ENCODE measurements at regions of chr1 and their contacts with region 1.

Region 1: DNA sequence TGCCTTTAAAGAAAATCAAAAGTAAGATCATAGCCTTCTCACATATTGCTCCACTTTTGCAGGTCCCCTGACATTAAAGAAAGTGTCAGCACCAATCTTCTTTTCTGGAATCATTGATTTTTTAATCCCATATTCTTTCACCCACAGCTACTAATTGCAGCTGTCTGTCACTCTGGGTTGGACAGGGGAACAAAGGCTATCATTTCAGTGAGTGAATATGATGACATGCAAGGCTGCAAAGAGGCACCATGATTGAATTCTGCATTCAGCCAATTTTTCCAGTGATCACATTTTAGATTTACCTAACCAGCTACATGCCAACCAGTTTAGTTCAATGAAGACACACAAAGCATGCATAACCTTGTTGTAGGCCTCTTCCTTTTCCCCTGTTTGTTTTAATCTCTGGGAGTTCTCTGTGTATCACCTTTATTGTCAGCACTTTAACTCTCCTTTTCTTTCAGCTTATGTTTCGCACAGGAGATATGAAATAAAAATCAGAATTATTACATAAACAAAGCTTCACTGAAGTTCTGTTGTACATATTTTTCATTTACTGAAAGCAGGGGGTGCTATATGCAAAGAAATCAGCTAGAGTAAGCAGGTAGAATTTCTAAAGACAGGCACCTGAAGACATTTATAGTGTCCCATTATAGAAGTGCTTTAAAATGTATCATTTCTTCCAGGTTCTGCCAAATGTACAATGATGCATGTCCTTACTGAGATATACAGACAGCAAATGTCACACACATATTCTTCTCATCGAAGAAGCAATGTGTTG is 584.8 kb downstream of the PLA2G4A start:
- DNase-seq: peak; percentile 29
- ATAC-seq: peak; percentile 48; the same call in 1 of the 2 replicates
- H3K4me3 ChIP-seq: no peak overlapping the region
- H3K27ac ChIP-seq: no peak overlapping the region
- H3K4me1 ChIP-seq: no peaks in the 10 kb centered on the region
- H3K27me3 ChIP-seq: no peaks in the 10 kb centered on the region
- CTCF ChIP-seq: peak; percentile 56

Region 2: DNA sequence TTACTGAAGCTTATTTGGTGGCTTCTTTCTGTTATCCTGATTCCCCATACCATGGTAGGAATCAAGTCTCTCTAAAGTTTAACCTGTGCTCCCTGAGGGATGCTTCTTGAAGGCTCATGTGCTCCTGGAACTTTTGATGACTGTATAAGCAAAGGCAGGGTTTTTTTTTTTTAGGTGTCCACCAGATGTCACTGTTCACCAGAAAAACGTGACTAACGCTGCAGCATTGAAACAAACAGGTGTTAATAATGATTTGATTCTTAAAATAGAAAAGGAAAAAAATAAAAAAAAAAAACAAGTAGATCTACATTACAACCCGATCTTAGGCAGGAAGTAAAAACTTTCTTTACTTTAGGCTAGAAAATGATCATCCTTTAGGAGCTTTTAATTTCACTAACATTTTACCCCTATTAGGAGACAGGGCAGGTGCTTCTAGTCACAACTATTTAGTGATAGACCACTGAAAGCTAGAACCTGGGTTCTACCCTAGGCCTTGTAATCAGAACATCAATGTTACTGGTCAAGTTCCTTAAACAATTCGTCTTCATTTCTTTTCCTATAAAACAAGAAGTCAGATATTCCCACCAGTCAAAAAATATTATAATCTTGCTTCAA is 361.9 kb before region 1 on chr1:
- CTCF ChIA-PET with region 1: no interaction called
- POLR2A ChIA-PET with region 1: no interaction called
- intact Hi-C with region 1: loop called (anchors 10 kb)
- DNase-seq: peak; percentile 51
- ATAC-seq: no peak
- H3K4me3 ChIP-seq: no peak overlapping the region
- H3K27ac ChIP-seq: no peak overlapping the region
- H3K4me1 ChIP-seq: peaks cover 4% of the 10 kb centered on the region; the same call in 1 of the 2 replicates
- H3K27me3 ChIP-seq: no peaks in the 10 kb centered on the region
- CTCF ChIP-seq: peak; percentile 68

Region 3: GRCh38 chr1:187491082-187491720 is 77.6 kb after region 1 on chr1:
- CTCF ChIA-PET with region 1: no interaction called
- POLR2A ChIA-PET with region 1: no interaction called
- intact Hi-C with region 1: no loop called
- DNase-seq: peak; percentile 70
- ATAC-seq: peak; percentile 80
- H3K4me3 ChIP-seq: no peak overlapping the region
- H3K27ac ChIP-seq: peak overlapping the region; percentile 61
- H3K4me1 ChIP-seq: peaks cover 17% of the 10 kb centered on the region
- H3K27me3 ChIP-seq: no peaks in the 10 kb centered on the region
- CTCF ChIP-seq: no peak

Region 4: DNA sequence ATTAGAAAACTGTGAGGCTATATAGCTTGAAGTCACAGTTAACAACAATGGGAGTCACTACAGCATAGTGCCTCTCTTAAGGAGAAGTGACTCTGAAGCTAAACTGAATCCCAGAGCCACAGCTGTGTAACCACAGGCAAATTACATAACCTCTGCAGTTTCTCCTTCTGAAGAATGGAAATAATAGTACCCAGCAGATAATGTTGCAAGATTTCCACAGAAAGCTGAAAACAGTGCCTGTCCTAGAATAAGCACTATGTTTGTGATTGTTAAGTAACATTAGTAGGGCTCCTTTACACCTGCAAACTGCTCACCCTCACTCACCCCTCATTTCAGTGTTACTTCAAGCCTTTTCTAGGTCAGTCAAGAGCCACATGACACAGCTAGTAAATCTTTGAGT is 301.9 kb after region 1 on chr1:
- CTCF ChIA-PET with region 1: no interaction called
- POLR2A ChIA-PET with region 1: no interaction called
- intact Hi-C with region 1: no loop called
- DNase-seq: no peak
- ATAC-seq: no peak
- H3K4me3 ChIP-seq: no peak overlapping the region
- H3K27ac ChIP-seq: no peak overlapping the region
- H3K4me1 ChIP-seq: no peaks in the 10 kb centered on the region
- H3K27me3 ChIP-seq: no peaks in the 10 kb centered on the region
- CTCF ChIP-seq: no peak

Region 5: GRCh38 chr1:187999973-188000372 is 586.4 kb after region 1 on chr1:
- CTCF ChIA-PET with region 1: interaction called, 3 read pairs
- POLR2A ChIA-PET with region 1: no interaction called
- intact Hi-C with region 1: loop called (anchors 1 kb)
- DNase-seq: peak; percentile 11
- ATAC-seq: peak; percentile 40; the same call in 1 of the 2 replicates
- H3K4me3 ChIP-seq: no peak overlapping the region
- H3K27ac ChIP-seq: no peak overlapping the region
- H3K4me1 ChIP-seq: no peaks in the 10 kb centered on the region
- H3K27me3 ChIP-seq: no peaks in the 10 kb centered on the region
- CTCF ChIP-seq: peak; percentile 39; the same call in 1 of the 2 replicates